Adrenal gland (tissue), 19 donors: ENCODE measurements at regions of chr5 and their contacts with region 1.

Region 1: GRCh38 chr5:154467655-154468354 is 10.2 kb downstream of the HAND1 start:
- DNase-seq: peak; percentile 62 to 93 (median 79)
- H3K4me3 ChIP-seq: no peak overlapping the region
- H3K27ac ChIP-seq: no peak overlapping the region
- H3K4me1 ChIP-seq: no peaks in the 10 kb centered on the region
- H3K27me3 ChIP-seq: peaks cover 31% of the 10 kb centered on the region
- CTCF ChIP-seq: peak; percentile 65 to 97 (median 82)
- POLR2A ChIP-seq: no peak

Region 2: DNA sequence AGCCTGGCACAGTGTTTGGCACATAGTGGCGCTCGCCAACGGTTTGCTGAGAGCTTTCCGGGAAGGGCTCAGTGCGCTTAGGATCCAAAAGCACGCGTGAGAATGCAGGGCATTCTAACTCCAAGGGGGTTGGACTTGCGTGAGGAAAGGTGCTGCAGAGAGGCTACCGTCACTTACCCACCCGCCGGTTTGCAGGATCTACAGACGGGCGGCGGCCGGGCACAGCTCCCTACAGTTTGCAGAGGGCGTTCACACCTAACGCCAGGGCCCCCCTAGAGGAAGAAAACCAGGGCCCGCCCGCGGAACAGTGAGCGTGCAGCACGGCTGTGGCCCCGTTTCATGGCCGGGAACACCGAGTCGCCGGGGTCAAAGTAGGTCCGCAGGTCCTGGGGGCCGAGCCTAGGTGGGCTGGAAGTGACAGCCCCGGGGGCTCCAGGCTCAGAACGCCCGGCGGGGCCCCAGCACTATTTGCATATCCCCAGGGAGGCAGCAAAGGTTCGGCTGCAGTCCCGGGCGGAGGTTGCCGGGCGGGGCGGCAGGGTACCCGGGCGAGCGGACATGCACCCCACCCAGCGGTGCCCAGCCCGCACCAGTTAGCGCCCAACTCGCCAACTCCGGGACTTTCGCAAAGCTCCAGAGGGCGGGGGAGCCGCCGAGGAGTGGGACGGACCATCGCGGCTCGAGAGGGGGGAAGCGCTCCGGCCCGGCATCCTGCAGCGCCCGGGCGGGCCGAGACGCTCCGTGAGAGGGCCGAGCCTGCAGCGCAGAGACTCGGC is 277.8 kb before region 1 on chr5:
- intact Hi-C with region 1: no loop called
- DNase-seq: peak; percentile 86 to 90 (median 89)
- H3K4me3 ChIP-seq: peak overlapping the region in 3 of 4 donors; percentile 44 to 85 (median 79)
- H3K27ac ChIP-seq: peak overlapping the region; percentile 10 to 97 (median 55)
- H3K4me1 ChIP-seq: peaks cover 21 to 38% of the 10 kb centered on the region in 2 donors
- H3K27me3 ChIP-seq: no peaks in the 10 kb centered on the region
- CTCF ChIP-seq: peak; percentile 7 to 43 (median 32)
- POLR2A ChIP-seq: peak in 1 of 2 donors; percentile 56

Region 3: GRCh38 chr5:154608531-154609011 is 140.8 kb after region 1 on chr5:
- intact Hi-C with region 1: loop called (anchors 5 kb)
- DNase-seq: no peak
- H3K4me3 ChIP-seq: no peak overlapping the region
- H3K27ac ChIP-seq: no peak overlapping the region
- H3K4me1 ChIP-seq: peaks cover 10 to 19% of the 10 kb centered on the region in 2 donors
- H3K27me3 ChIP-seq: peaks cover 27% of the 10 kb centered on the region
- CTCF ChIP-seq: no peak
- POLR2A ChIP-seq: no peak